Psoas muscle (tissue), 8 donors: ENCODE measurements at regions of chr6 and their contacts with region 1.

Region 1: DNA sequence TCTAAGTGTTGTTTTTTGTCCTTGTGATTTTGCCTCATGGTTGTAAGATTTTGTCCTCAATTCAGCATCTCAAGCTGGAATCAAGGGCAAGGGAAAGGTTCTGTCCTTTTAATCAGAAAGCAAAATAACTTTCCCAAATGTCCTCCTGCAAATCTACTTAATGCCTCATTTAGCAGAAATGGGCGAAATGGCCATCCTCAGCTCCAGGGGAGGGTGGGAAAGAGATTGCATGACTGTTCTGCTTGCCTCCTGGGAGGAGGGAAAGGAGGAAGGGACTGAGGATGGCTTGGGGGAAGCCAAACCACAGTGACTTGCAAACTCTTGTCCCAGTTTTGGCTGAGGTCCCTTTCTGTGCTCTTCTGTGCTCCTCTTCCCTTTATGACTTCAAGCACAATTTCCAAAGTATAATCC is 43.4 kb downstream of the TNFAIP3 start:
- DNase-seq: no peak
- ATAC-seq: peak in 3 of 4 donors; percentile 61 to 71 (median 65)
- H3K4me3 ChIP-seq: no peak overlapping the region
- H3K27ac ChIP-seq: peak overlapping the region; percentile 49
- H3K4me1 ChIP-seq: peaks cover 23% of the 10 kb centered on the region
- H3K27me3 ChIP-seq: no peaks in the 10 kb centered on the region
- CTCF ChIP-seq: no peak

Region 2: DNA sequence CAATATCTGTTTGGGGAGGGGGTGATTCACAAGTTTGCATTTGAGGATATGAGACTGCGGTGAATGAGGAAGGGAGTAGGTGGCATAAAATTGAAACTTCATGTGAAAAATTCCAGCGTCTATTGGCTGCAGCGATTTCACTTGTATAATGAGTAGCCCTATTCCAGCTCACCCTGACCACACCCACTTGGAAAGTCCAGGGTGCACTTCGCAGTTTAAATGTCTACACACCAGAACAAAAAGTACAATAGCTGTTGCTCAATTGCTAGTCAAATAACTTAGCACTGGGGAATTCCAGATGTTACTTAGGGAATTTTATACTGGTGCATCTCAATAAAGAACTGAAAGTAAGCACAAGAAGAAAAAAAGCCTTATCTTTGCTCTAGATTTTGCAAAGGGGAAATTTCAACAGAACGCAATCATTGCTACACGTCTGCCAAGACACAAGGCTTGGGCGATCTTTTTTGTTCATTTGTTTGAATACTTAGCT is 37.1 kb before region 1 on chr6:
- intact Hi-C with region 1: loop called in 1 of 2 experiments (anchors 5 kb)
- DNase-seq: peak; percentile 62 to 66
- ATAC-seq: peak; percentile 65 to 93 (median 92)
- H3K4me3 ChIP-seq: peak overlapping the region; percentile 33
- H3K27ac ChIP-seq: peak overlapping the region; percentile 25
- H3K4me1 ChIP-seq: peaks cover 47% of the 10 kb centered on the region
- H3K27me3 ChIP-seq: no peaks in the 10 kb centered on the region
- CTCF ChIP-seq: no peak

Region 3: DNA sequence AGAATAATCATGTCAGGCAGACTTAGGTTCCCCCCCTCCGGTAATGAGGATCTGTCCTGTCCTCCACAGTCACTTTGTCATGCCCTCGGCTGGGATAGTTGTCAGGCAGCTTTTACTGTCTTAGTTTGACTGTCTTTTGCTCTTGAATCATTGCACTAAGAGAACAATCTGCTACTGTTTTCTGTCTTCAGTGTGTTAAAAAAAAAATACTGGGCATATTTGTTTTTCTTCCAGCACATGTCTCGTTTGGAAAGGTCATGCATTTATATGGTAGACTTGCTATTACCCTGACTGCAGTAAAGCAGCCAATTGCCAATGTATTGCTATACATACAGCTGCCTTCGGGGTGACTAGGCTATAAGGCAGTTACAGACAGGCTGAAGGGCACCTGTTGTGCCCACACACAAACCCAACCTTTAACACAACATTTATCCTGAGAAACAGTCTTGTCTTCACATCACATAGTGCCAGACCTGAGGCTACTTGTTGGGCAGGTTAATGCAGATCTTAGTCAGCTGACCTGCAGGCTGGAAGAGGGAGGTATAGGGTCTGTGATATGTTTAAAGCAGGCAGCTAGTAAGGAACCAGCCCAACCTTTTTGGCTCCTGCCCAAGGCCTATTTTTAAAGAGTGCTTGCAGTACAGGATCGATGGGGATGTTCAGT is 278.0 kb after region 1 on chr6:
- intact Hi-C with region 1: no loop called
- DNase-seq: no peak
- ATAC-seq: no peak
- H3K4me3 ChIP-seq: no peak overlapping the region
- H3K27ac ChIP-seq: no peak overlapping the region
- H3K4me1 ChIP-seq: no peaks in the 10 kb centered on the region
- H3K27me3 ChIP-seq: no peaks in the 10 kb centered on the region
- CTCF ChIP-seq: no peak